Thyroid gland (tissue), 4 donors: ENCODE measurements at regions of chr9 and their contacts with region 1.

Region 1: GRCh38 chr9:125143375-125144090 is at the start of gene SCAI:
- DNase-seq: peak; percentile 100
- H3K4me3 ChIP-seq: peak within 1 kb of the TSS; percentile 12 to 93 (median 58)
- H3K27ac ChIP-seq: peak within 1 kb of the TSS in 2 of 3 donors; percentile 71 to 74
- H3K4me1 ChIP-seq: peaks cover 0 to 5% of the 10 kb centered on the region in 2 donors
- H3K27me3 ChIP-seq: no peaks in the 10 kb centered on the region
- CTCF ChIP-seq: peak; percentile 98 to 100 (median 99)
- POLR2A ChIP-seq: peak in 1 of 2 donors; percentile 81
- total RNA-seq, gene SCAI: 10.4 to 13.4 (median 12.5) TPM

Region 2: DNA sequence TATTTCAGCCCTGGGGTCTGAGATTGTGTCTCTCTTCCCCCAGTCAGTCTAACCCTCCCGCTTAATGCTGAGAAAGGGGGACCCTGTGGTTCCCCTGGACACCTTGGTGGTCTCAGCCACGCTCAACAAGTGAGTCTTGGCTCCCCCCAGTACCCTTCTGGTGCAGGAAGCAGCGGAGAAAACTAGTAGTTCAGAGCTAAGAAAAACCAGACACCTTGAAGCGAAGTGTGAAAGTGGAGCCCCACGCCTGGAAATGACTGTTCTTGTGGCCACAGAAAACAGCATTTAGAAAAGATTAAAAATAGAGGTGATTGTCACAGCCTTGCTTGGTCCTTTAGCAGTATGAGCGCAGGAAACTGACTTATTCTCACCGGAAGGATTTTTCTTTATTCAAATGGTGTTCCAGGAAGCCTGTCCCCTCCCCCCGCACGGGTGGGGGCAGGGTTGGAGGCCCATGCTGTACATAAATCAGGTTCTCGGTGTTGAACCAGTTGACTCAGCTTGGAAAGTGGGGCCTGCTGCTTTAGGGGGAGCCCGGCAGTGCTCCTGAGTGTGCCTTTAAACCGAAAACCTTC is 273.5 kb before region 1 on chr9:
- intact Hi-C with region 1: loop called (anchors 10 kb)
- DNase-seq: peak; percentile 44 to 59
- H3K4me3 ChIP-seq: peak overlapping the region; percentile 68 to 87 (median 82)
- H3K27ac ChIP-seq: peak overlapping the region in 2 of 3 donors; percentile 80
- H3K4me1 ChIP-seq: peaks cover 24 to 46% of the 10 kb centered on the region in 2 donors
- H3K27me3 ChIP-seq: no peaks in the 10 kb centered on the region
- CTCF ChIP-seq: no peak
- POLR2A ChIP-seq: no peak

Region 3: DNA sequence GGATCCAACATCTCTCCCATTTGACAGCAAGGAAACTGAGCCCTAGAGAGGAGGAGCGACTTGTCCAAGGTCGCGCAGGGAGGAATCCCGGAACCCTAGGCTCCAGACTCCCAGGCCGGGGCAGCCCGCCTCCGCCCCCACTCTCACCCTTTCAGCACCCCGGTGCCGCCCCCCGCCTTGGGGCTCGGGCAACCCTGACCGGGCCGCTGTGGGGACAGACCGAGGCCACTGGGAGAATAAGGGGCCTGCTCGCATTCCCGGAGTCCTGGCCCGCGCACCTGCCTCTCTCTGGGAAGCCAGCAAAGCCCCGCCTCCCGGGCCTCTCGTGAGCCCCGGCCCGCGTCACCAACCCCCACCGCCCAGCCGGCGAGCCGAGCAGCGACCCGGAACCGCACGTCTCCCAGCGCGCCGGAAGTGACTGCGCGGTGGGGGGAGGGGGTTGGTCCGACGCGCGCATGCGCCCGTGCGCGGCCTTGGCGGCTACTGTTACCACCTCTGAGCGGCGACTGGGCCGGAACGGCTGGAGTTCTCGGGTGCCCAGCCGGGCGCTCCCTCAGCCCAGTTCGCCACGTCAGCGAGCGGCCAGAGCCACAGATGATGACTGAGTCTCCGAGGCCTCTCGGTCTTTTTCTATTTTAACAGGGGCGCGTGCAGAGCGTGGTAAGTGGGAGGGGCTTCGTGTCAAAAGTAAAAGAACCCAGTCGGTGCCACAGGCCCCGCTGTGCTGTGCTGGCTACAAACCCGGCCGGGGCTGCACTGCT is 202.7 kb before region 1 on chr9 and contains the start of gene GOLGA1:
- intact Hi-C with region 1: loop called (anchors 5 kb)
- DNase-seq: peak; percentile 98
- H3K4me3 ChIP-seq: peak within 1 kb of the TSS; percentile 60 to 71 (median 66)
- H3K27ac ChIP-seq: peak within 1 kb of the TSS; percentile 83 to 96 (median 87)
- H3K4me1 ChIP-seq: peaks cover 6 to 9% of the 10 kb centered on the region in 2 donors
- H3K27me3 ChIP-seq: no peaks in the 10 kb centered on the region
- CTCF ChIP-seq: peak in 2 of 6 experiments; percentile 3
- POLR2A ChIP-seq: peak; percentile 73 to 92
- total RNA-seq, gene GOLGA1: 15.3 to 27.7 (median 18.6) TPM

Region 4: DNA sequence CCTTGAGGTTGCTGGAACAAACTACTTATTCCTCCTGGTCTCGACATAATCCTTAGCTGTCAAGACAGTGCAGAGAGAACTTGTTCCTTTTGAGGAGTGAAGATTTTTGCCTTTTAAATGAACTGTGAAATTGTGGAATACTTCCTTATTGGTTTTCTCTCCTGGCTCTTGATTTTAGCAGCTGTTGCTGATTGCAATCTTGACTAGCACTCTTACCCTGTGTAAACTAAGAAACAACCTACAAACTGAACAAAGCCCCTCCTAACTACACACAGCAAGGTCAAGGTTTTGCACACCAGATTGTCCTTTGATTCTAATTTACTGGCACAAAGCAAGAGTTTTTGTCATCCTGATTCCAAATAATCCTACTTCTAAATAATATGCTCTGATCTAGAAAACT is 118.6 kb before region 1 on chr9:
- intact Hi-C with region 1: no loop called
- DNase-seq: no peak
- H3K4me3 ChIP-seq: no peak overlapping the region
- H3K27ac ChIP-seq: no peak overlapping the region
- H3K4me1 ChIP-seq: no peaks in the 10 kb centered on the region
- H3K27me3 ChIP-seq: no peaks in the 10 kb centered on the region
- CTCF ChIP-seq: no peak
- POLR2A ChIP-seq: no peak

Region 5: GRCh38 chr9:125446581-125447094 is 303.1 kb after region 1 on chr9:
- intact Hi-C with region 1: no loop called
- DNase-seq: no peak
- H3K4me3 ChIP-seq: no peak overlapping the region
- H3K27ac ChIP-seq: no peak overlapping the region
- H3K4me1 ChIP-seq: peaks cover 5 to 12% of the 10 kb centered on the region in 2 donors
- H3K27me3 ChIP-seq: no peaks in the 10 kb centered on the region
- CTCF ChIP-seq: no peak
- POLR2A ChIP-seq: no peak